ENCODE measurements at regions of chr3 and their contacts with region 1.

Region 1: DNA sequence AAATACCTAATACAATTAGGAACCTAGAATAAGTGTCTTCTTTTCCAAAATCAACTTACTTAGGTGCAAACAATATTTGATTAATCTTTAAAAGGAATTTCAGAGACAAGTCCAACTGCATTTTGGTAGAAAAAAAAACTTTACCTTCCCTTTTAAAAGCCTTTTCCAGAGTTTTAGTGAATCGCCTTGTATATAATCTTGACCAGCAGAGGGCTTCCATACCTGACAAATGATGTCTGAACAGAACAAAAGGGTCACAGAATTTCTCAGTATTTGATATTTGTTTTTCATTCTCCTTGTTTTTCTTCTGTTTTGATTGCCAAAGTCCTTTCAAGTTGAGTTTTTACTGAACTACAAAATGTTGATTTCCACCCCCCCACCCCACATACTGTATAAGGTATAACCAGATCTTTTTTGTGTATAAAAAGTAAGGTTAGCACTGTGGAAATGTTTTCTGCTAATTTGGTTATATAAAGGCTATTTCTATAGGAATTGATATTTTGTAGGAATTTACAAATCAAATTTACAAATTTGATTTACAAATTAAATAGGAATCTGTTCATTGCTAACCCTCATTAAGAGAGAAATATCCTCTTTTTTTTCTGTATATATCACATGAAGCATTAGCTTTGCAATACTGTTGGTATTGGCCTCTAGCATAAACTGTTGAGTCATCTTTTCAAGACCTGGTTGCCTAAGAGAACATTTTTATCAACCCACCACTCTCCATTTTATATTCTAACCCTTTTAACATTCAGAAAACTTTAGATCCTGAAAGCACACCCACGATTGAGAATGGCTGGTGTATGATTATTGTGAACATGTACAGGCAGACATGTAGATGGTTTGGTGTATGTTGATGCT is 464.1 kb upstream of the RARB start:
- DNase-seq: no peak
- ATAC-seq: no peak
- H3K4me3 ChIP-seq: no peak overlapping the region
- H3K27ac ChIP-seq: no peak overlapping the region
- H3K4me1 ChIP-seq: no peaks in the 10 kb centered on the region
- H3K27me3 ChIP-seq: no peaks in the 10 kb centered on the region
- CTCF ChIP-seq: peak in 6 of 7 experiments; percentile 21 to 41 (median 37)
- POLR2A ChIP-seq: no peak

Region 2: GRCh38 chr3:25021816-25022215 is 57.8 kb after region 1 on chr3:
- intact Hi-C with region 1: no loop called
- DNase-seq: no peak
- ATAC-seq: no peak
- H3K4me3 ChIP-seq: no peak overlapping the region
- H3K27ac ChIP-seq: no peak overlapping the region
- H3K4me1 ChIP-seq: no peaks in the 10 kb centered on the region
- H3K27me3 ChIP-seq: no peaks in the 10 kb centered on the region
- CTCF ChIP-seq: peak in 6 of 7 experiments; percentile 7 to 25 (median 14)
- POLR2A ChIP-seq: no peak

Region 3: GRCh38 chr3:25594007-25594502 is 630.1 kb after region 1 on chr3:
- intact Hi-C with region 1: loop called (anchors 10 kb)
- DNase-seq: no peak
- ATAC-seq: peak; percentile 64
- H3K4me3 ChIP-seq: no peak overlapping the region
- H3K27ac ChIP-seq: no peak overlapping the region
- H3K4me1 ChIP-seq: peaks cover 29% of the 10 kb centered on the region
- H3K27me3 ChIP-seq: no peaks in the 10 kb centered on the region
- CTCF ChIP-seq: peak; percentile 52 to 81 (median 69)
- POLR2A ChIP-seq: no peak

Measured in body of pancreas (tissue), 4 donors.